Transverse colon (tissue), 4 donors: ENCODE measurements at regions of chr12 and their contacts with region 1.

Region 1: DNA sequence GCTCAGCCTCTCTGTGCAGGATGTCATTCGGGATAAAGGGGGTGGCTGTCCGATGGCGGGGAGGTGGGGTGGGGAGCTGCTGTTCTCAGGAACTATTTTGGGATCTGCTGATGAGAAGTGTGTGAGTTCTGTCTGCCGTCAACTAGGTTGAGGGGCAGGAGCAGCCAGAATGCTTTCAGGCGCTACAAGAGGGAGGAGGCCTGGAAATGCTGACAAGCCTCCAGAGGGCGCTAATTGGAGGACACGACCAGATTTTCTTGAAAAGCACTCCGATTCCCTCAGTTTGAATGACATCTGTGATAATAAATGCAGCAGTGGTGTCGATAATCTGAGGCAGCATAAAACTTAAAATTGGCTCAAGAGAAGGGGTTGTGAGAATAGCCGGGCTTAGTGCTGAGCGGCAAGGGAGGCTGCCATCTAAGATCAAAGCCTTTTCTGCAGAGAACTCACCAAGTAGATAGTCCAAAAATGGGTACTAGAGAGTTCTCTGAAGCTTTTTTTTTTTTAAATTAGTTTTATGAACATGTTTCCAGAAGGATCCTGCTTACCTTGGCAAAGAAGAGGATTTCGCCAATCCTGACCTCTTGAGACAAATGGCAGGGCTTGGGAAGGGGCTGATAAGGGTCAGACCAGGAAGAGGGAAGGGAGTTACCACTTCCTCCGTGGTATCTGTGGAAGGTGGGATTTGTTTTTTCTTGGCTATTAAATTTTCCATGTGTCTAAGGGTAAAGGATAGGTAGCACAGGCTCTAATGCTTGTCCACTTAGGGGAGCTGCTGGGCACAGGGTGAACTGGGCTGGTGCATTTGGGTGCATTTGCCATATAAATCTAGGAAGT is 94.4 kb downstream of the CRACR2A start:
- DNase-seq: peak; percentile 42
- H3K4me3 ChIP-seq: no peak overlapping the region
- H3K27ac ChIP-seq: no peak overlapping the region
- H3K4me1 ChIP-seq: no peaks in the 10 kb centered on the region
- H3K27me3 ChIP-seq: no peaks in the 10 kb centered on the region
- CTCF ChIP-seq: peak; percentile 25 to 52 (median 42)
- EP300 ChIP-seq: no peak
- POLR2A ChIP-seq: no peak

Region 2: GRCh38 chr12:3761116-3761735 is 102.7 kb after region 1 on chr12:
- in situ Hi-C with region 1: loop called in 1 of 4 experiments (anchors 10 kb)
- intact Hi-C with region 1: no loop called
- DNase-seq: no peak
- H3K4me3 ChIP-seq: no peak overlapping the region
- H3K27ac ChIP-seq: no peak overlapping the region
- H3K4me1 ChIP-seq: peaks cover 0 to 14% (median 2%) of the 10 kb centered on the region in 4 donors
- H3K27me3 ChIP-seq: no peaks in the 10 kb centered on the region
- CTCF ChIP-seq: no peak
- EP300 ChIP-seq: no peak
- POLR2A ChIP-seq: no peak

Region 3: GRCh38 chr12:3777206-3777809 is 118.8 kb after region 1 on chr12:
- in situ Hi-C with region 1: loop called in 2 of 4 experiments (anchors 5 to 10 kb)
- intact Hi-C with region 1: no loop called
- DNase-seq: no peak
- H3K4me3 ChIP-seq: no peak overlapping the region
- H3K27ac ChIP-seq: no peak overlapping the region
- H3K4me1 ChIP-seq: no peaks in the 10 kb centered on the region
- H3K27me3 ChIP-seq: no peaks in the 10 kb centered on the region
- CTCF ChIP-seq: peak; percentile 58 to 75 (median 67)
- EP300 ChIP-seq: no peak
- POLR2A ChIP-seq: no peak